Activated CD4-positive, alpha-beta T cell treated with anti-CD3 and anti-CD28 coated beads for 36 hours (primary cell): ENCODE measurements at regions of chr16 and their contacts with region 1.

Region 1: GRCh38 chr16:69465083-69465721 is 40.8 kb downstream of the CYB5B start:
- DNase-seq: peak; percentile 26
- ATAC-seq: peak; percentile 65
- H3K4me3 Mint-ChIP-seq: no peak overlapping the region
- H3K27ac Mint-ChIP-seq: peak overlapping the region; percentile 48
- H3K4me1 Mint-ChIP-seq: peaks cover 49% of the 10 kb centered on the region
- H3K27me3 Mint-ChIP-seq: no peaks in the 10 kb centered on the region

Region 2: DNA sequence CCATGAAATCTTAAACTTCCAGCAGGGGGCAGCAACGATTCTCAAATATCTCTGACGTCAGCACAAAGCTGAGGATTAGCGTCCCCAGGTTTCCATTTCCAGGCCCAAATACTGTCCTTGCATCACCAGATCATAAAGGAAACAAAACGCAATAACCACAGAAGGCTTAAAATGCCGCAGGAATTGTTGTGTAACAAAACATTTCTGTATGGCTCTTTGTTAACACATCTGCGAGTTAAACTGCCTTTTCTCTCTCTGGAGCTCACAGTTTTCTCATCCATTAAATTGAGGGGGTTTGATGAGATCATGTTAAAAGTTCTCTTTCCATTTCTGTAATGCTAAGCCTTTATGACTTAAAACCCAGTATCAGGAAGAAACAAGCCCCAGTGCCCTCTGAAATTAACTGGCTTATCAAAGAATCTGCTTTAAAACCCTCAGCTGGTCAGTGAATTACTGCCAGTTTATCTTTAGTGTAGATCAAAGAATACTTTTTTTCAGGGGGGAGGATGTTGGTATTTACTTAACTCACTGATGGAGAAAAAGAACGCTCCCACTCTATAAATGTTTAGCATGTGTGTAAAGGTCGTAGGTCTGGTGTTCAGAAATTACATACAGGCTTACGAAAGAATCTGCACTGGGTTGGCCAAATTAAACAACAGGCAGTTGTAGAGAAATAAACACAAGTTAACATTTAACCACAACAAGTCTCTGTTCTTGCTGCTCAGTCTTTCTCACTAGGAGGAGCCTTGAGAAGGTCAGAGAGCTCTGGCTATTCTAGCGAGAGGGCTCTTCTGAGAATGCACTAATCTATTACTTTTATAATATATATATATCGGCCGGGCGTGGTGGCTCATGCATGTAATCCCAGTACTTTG is 68.8 kb before region 1 on chr16:
- CTCF ChIA-PET with region 1: interaction called, 6 read pairs
- POLR2A ChIA-PET with region 1: no interaction called
- intact Hi-C with region 1: loop called (anchors 1 to 5 kb)
- DNase-seq: peak; percentile 83
- ATAC-seq: peak; percentile 63
- H3K4me3 Mint-ChIP-seq: no peak overlapping the region
- H3K27ac Mint-ChIP-seq: peak overlapping the region; percentile 70
- H3K4me1 Mint-ChIP-seq: peaks cover 20% of the 10 kb centered on the region
- H3K27me3 Mint-ChIP-seq: no peaks in the 10 kb centered on the region

Region 3: DNA sequence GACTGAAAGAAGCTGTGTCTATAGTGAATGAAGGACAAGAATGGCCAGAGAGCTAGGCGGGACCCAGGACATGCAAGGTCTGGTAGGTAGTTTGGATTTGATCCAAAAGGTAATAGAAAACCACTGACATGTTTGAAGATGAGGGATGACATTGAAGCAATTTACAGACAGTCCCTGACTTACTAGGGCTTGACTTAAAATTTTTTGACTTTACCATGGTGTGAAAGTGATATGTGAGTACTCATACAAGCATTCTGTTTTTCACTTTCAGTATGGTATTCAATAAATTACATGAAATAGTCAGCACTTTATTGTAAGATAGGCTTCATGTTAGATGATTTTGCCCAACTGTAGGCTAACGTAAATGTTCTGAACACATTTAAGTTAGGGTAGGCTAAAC is 33.1 kb before region 1 on chr16:
- CTCF ChIA-PET with region 1: interaction called, 3 read pairs
- POLR2A ChIA-PET with region 1: interaction called, 7 read pairs
- intact Hi-C with region 1: loop called in 1 of 2 experiments (anchors 5 kb)
- DNase-seq: no peak
- ATAC-seq: peak; percentile 77
- H3K4me3 Mint-ChIP-seq: no peak overlapping the region
- H3K27ac Mint-ChIP-seq: peak overlapping the region; percentile 77
- H3K4me1 Mint-ChIP-seq: peaks cover 65% of the 10 kb centered on the region
- H3K27me3 Mint-ChIP-seq: no peaks in the 10 kb centered on the region

Region 4: GRCh38 chr16:69443927-69444631 is 21.1 kb before region 1 on chr16:
- CTCF ChIA-PET with region 1: no interaction called
- POLR2A ChIA-PET with region 1: no interaction called
- intact Hi-C with region 1: loop called in 1 of 2 experiments (anchors 2 kb)
- DNase-seq: peak; percentile 47
- ATAC-seq: peak; percentile 71
- H3K4me3 Mint-ChIP-seq: peak overlapping the region; percentile 65
- H3K27ac Mint-ChIP-seq: peak overlapping the region; percentile 94
- H3K4me1 Mint-ChIP-seq: peaks cover 36% of the 10 kb centered on the region
- H3K27me3 Mint-ChIP-seq: no peaks in the 10 kb centered on the region

Region 5: GRCh38 chr16:69535123-69536050 is 70.2 kb after region 1 on chr16:
- CTCF ChIA-PET with region 1: interaction called, 3 read pairs
- POLR2A ChIA-PET with region 1: no interaction called
- intact Hi-C with region 1: loop called in 1 of 2 experiments (anchors 1 kb)
- DNase-seq: no peak
- ATAC-seq: no peak
- H3K4me3 Mint-ChIP-seq: no peak overlapping the region
- H3K27ac Mint-ChIP-seq: no peak overlapping the region
- H3K4me1 Mint-ChIP-seq: peaks cover 21% of the 10 kb centered on the region
- H3K27me3 Mint-ChIP-seq: peaks cover 1% of the 10 kb centered on the region